Cardiac septum (tissue), 1 donor: ENCODE measurements at regions of chr2 and their contacts with region 1.

Region 1: GRCh38 chr2:238462782-238463396 is 36.2 kb downstream of the ASB1 start:
- DNase-seq: no peak

Region 2: DNA sequence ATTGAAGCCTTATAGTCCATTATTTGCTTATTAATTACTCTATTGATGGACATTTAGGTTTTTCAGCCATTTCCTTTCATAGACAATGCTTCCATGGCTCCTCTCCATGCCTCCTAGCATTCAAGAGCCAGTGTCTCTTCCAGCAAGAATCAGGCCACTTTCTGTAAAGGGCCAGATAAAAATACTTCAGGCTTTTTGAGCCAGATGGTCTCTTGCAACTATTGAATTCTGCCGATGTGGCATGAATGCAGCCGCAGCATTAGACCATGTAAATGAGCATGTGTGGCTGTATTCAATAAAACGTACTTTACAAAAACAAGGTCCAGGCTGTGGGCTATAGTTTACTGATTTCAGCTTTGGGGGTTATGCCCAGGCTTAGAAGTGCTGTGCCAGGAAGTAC is 104.1 kb before region 1 on chr2:
- intact Hi-C with region 1: loop called (anchors 5 kb)
- DNase-seq: no peak

Region 3: GRCh38 chr2:238370823-238371372 is 92.0 kb before region 1 on chr2:
- intact Hi-C with region 1: loop called (anchors 2 kb)
- DNase-seq: no peak

Region 4: DNA sequence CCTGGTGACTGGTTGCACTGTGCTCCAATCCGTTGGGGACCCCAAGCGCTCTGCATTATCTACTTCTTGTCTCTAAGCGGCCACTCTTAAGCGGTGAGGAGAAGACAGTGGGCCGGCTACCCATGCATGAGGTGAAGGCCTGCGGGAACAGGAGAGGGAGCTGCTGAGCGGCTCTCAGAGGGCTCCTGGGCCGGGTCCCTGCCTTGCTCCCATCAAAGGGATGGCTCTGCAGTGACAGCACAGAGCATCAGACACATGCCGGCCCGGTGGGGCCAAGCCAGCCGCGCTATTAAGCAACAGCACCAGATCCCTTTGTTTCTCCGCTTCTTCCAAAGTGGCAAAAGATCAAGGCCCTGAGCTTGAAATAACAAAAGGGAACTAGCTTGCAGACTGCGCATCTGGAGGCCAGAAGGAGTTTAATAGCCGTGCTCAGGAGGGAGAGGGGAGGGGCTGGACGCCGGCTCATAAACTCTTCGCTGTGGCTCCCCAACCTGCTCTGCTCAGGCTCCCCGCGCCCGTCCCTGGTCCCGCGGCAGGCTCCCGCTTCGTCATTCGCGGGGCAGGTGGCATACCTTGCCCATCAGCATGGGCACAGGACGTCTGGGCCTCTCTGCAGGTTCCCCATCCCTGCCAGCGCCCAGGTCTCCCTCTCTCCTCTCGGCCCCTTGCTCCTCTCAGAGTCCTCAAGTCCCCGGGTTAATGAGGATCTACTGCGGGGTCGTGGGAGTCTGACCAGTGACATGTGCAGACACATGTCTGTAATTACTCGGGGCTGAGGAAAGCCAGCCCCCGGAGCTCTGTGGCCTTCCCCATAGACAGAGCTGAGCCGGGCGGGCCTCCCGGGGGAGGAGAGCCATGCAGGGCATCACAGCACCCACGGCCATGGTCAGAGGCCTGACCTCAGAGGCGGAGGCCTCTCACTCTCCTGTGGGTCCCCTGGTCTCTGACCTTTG is 60.5 kb after region 1 on chr2:
- intact Hi-C with region 1: no loop called
- DNase-seq: no peak

Region 5: DNA sequence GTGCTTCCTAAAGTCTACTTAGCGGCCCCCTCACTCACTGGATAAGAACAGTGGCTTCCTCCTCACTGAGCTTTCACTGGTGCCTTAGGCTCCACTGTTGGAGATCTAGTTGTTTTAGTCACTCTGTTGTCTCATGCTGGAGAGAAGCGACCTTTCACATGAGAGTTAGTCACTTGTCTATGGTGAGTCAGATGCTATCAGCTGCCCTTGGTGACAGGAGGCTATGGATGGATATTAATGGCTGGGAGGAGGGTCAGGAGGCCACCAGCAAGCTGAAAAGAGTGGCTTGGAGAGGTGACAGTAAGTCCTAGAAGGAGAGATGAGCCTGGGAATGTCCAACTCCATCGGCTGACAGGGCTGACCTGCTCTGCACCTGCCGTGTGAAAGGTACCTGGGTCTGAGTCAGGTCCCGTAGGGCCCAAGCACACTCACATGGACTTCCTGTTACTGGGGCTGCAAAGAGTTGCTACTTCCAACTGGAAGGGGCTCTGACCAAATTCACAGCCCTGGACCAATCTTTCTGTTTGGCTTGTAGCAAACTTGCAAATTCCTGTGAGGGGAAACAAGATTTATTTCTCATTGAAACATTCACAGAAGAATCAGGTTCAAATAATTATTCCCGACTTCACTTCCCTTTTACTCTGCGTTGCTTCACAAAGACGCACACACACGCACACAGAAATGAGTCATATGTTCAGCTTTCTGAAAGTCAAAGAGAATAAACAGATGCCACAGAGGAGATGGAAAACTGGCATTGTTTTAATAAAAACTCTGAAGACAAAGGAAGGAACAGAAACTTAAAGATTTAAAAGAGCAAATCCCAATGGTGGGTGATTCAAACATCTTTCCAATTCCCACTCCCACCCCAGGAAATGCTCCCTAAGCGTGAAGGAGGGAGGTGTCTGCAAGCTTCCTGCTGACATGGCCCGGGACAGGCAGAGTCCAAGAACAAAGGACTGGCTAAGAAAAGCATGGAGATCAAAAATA is 181.5 kb after region 1 on chr2:
- intact Hi-C with region 1: no loop called
- DNase-seq: no peak